Heart right ventricle (tissue), 16 donors: ENCODE measurements at regions of chr5 and their contacts with region 1.

Region 1: DNA sequence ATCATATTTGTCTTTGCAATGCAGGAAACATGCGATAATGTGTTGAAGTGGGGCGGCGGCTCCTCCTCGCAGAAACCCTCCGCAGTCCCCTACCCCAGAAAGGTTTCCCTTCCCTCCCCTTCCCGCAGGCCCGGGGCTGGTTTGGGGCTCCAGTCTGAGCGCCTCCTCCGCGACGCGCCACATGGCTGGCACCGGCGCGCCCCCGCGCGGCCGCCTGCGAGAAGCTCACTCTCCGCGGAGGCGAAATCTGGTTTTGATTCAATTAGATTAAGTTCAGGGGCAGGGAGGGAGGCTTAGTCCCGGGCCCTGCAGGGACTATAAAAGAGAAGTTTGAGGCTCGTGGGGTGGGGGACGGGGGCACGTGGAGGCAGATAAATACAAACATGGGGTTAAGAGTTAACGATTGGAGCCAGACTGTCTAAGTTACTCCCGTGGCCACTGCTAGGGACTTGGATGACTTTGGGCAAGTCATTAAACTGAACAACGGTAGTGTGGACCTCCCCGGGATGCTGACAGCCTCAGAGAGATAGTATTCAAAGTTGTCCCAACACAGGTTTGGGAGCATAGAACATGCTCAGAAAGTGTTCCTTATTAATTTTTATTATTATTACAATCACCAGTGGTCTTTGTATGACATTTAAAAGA is 69.4 kb downstream of the MSX2 start:
- DNase-seq: peak; percentile 34 to 52
- ATAC-seq: peak in 7 of 8 donors; percentile 58 to 84 (median 70)
- H3K4me3 ChIP-seq: no peak overlapping the region
- H3K27ac ChIP-seq: no peak overlapping the region
- H3K4me1 ChIP-seq: peaks cover 0 to 11% (median 0%) of the 10 kb centered on the region in 9 donors
- H3K27me3 ChIP-seq: peaks cover 0 to 56% (median 45%) of the 10 kb centered on the region in 7 donors
- CTCF ChIP-seq: peak; percentile 62 to 86 (median 81)

Region 2: DNA sequence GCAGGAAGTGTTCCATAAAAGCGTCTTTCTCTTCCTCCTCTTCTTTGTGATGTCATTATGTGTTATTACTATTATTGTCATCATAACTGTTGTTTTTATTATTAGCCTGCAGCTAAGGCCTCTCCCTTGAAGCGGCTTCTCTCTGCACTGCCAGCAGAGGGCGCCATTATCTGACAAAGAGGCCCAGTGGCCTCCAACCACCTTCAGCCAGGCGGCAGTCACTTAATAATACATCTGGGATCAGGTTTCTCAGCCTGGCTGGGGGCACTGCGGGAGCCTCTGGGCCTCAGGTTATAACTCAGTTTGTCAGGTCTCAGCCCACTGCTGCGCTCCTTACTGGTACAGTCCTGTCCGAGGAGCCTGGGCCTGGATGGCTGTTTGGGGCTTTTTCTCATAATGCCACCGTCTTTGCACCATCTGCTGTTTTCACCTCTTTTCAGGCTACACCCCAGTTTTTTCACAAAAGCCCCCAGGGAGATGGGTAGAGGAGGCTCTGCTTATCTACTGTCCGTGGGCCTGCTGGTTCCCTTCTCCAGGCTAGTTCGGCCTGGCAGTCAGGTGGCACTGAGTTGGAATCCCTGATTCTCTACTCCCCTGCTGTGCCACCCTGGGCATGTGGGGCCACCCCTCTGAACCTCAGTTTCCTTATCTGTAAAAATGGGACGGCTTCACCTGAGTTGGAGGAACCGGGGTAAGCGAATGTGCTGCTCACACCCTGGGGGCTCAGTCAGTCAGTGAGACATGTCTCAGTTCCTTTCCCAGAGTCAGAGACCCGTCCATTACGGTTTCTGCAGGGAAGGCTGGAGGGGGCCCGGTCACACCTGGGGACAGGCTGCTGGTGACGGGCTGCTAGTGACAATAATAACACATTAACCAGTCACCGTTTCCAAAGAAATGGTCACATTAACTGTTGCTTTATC is 466.2 kb before region 1 on chr5:
- intact Hi-C with region 1: loop called in 5 of 10 experiments (anchors 5 to 10 kb)
- DNase-seq: peak; percentile 42 to 63
- ATAC-seq: peak in 7 of 8 donors; percentile 20 to 70 (median 57)
- H3K4me3 ChIP-seq: no peak overlapping the region
- H3K27ac ChIP-seq: no peak overlapping the region
- H3K4me1 ChIP-seq: no peaks in the 10 kb centered on the region
- H3K27me3 ChIP-seq: peaks cover 0 to 65% (median 17%) of the 10 kb centered on the region in 7 donors
- CTCF ChIP-seq: peak in 8 of 9 donors; percentile 46 to 74 (median 69)

Region 3: GRCh38 chr5:174338185-174339010 is 455.4 kb before region 1 on chr5:
- intact Hi-C with region 1: loop called in 1 of 10 experiments (anchors 10 kb)
- DNase-seq: no peak
- ATAC-seq: peak in 4 of 8 donors; percentile 39 to 74 (median 52)
- H3K4me3 ChIP-seq: no peak overlapping the region
- H3K27ac ChIP-seq: peak overlapping the region in 1 of 10 donors; percentile 18
- H3K4me1 ChIP-seq: peaks cover 0 to 16% (median 7%) of the 10 kb centered on the region in 9 donors
- H3K27me3 ChIP-seq: peaks cover 0 to 38% (median 27%) of the 10 kb centered on the region in 7 donors
- CTCF ChIP-seq: no peak

Region 4: GRCh38 chr5:174418928-174419796 is 374.6 kb before region 1 on chr5:
- intact Hi-C with region 1: loop called (anchors 1 to 5 kb)
- DNase-seq: peak; percentile 85 to 89
- ATAC-seq: peak; percentile 81 to 96 (median 92)
- H3K4me3 ChIP-seq: peak overlapping the region in 6 of 10 donors; percentile 25 to 34 (median 30)
- H3K27ac ChIP-seq: peak overlapping the region in 1 of 10 donors; percentile 58
- H3K4me1 ChIP-seq: peaks cover 0 to 8% (median 6%) of the 10 kb centered on the region in 9 donors
- H3K27me3 ChIP-seq: peaks cover 0 to 66% (median 42%) of the 10 kb centered on the region in 7 donors
- CTCF ChIP-seq: peak; percentile 54 to 95 (median 89)

Region 5: DNA sequence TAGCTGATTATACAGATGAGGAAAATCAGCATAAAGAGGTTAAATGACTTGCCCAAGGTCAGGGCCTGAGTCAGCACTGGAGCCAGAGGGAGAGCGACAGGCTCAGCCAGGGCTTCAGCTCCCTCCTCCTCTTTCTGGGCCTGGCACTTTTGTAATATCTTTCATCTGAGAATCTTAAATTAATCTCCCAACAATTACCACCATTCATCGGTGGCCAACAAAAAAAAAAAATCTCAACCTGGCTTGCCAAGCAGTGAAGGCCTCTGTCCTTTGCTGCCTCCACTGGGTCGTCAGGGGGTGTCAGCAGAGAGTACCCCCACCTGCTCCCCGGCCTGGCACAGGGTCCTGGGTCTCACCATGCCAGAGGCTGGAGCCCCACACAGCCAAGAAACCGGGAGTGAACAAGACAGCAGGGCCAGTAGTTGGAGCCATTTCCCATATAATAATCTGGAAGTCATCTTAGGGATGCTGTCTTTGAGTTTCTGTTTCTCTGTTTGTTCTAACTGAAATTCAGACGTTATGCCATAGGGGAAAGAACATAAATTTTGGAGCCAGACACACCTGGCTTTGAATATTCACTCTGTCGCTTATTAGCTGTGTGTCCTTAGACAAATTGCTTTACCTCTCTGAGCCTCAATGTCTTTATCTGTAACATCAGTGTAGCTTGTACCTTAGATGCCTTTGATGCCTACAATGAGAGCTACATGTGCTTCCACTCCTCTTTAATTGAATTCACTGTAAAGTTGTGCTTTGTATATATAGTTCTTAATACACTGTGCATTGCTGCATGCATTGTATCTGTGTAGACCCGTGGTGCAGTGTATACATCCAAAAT is 369.4 kb before region 1 on chr5:
- intact Hi-C with region 1: loop called (anchors 1 to 5 kb)
- DNase-seq: no peak
- ATAC-seq: no peak
- H3K4me3 ChIP-seq: no peak overlapping the region
- H3K27ac ChIP-seq: no peak overlapping the region
- H3K4me1 ChIP-seq: peaks cover 0 to 6% (median under 1%) of the 10 kb centered on the region in 9 donors
- H3K27me3 ChIP-seq: peaks cover 0 to 33% (median 13%) of the 10 kb centered on the region in 7 donors
- CTCF ChIP-seq: no peak